ENCODE measurements at regions of chr2 and their contacts with region 1.

Region 1: GRCh38 chr2:101463891-101464641 is 10.8 kb downstream of the RFX8 start:
- DNase-seq: no peak
- H3K4me3 Mint-ChIP-seq: no peak overlapping the region
- H3K27ac Mint-ChIP-seq: no peak overlapping the region
- H3K4me1 Mint-ChIP-seq: peaks cover 9% of the 10 kb centered on the region
- H3K27me3 Mint-ChIP-seq: no peaks in the 10 kb centered on the region

Region 2: GRCh38 chr2:101295895-101296294 is 168.2 kb before region 1 on chr2:
- CTCF ChIA-PET with region 1: no interaction called
- POLR2A ChIA-PET with region 1: no interaction called
- DNase-seq: no peak
- H3K4me3 Mint-ChIP-seq: no peak overlapping the region
- H3K27ac Mint-ChIP-seq: no peak overlapping the region
- H3K4me1 Mint-ChIP-seq: peaks cover 37% of the 10 kb centered on the region
- H3K27me3 Mint-ChIP-seq: no peaks in the 10 kb centered on the region

Region 3: GRCh38 chr2:101473911-101474701 is 10.0 kb after region 1 on chr2:
- CTCF ChIA-PET with region 1: interaction called, 3 read pairs
- POLR2A ChIA-PET with region 1: interaction called, 13 read pairs
- DNase-seq: peak; percentile 56
- H3K4me3 Mint-ChIP-seq: peak overlapping the region; percentile 80
- H3K27ac Mint-ChIP-seq: peak overlapping the region; percentile 95
- H3K4me1 Mint-ChIP-seq: peaks cover 52% of the 10 kb centered on the region
- H3K27me3 Mint-ChIP-seq: no peaks in the 10 kb centered on the region